PC-3 (cell line): ENCODE measurements at regions of chr11 and their contacts with region 1.

Region 1: DNA sequence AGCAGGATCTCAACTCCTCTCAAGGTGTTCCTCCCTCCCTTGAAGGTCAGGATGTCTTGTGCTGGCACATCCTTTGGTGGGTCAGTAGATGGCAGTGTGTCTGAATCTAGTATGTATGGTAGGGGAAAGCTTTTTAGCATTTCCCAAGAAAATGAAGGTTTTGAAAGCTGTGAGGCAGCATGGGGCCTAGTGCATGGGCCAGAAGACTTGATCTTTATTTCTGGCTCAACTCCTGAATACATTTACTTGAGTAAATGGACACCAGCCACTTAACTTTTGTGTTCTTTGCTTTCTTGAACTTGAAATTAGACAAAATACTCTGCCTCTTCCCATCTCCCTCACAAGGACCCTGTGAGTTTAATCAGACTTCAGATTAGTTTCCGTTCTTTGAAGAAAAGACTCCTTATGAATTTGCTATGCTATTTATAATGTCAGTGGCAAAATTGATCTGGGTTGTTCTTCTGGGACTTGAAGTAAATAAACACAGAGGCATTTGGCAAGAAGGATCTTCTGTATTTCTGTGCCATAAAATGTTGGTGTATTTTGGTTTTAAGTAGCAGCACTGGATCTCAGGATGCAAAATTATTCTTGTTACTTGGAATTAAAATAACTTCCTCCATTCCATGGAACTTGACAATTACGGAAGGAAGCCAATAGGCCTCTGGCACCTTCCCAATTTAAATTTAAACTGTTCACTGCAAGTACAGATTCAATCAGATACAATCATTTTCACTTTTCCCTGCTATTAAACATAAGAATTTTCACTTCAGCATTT is 288.8 kb downstream of the CASP12 start:
- DNase-seq: peak; percentile 75
- ATAC-seq: peak; percentile 98
- H3K4me3 ChIP-seq: no peak overlapping the region
- H3K27ac ChIP-seq: no peak overlapping the region
- H3K4me1 ChIP-seq: no peaks in the 10 kb centered on the region
- H3K27me3 ChIP-seq: no peaks in the 10 kb centered on the region
- CTCF ChIP-seq: peak; percentile 93

Region 2: DNA sequence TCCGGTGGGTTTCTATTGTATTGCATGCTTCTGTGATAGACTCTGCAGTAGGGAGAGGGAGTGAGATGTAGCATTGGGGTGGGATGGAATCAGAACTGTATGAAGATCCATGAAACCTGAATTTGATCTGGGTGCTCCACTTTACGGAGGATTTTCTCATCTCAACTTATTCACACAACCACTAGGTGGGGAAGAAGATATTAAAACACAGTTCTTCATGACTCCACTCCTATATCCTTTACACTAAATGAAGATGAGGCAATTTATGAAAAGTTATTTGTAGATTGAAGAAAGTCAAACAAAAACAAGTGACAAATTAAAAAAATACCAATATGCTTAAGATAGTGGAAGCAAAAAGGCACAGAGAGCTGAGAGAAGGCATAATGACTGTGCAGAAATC is 353.0 kb before region 1 on chr11:
- CTCF ChIA-PET with region 1: no interaction called
- POLR2A ChIA-PET with region 1: no interaction called
- intact Hi-C with region 1: loop called (anchors 5 kb)
- DNase-seq: peak; percentile 42
- ATAC-seq: peak; percentile 56; the same call in 1 of the 2 replicates
- H3K4me3 ChIP-seq: no peak overlapping the region
- H3K27ac ChIP-seq: no peak overlapping the region
- H3K4me1 ChIP-seq: no peaks in the 10 kb centered on the region
- H3K27me3 ChIP-seq: no peaks in the 10 kb centered on the region
- CTCF ChIP-seq: peak; percentile 64

Region 3: GRCh38 chr11:104946907-104947306 is 337.4 kb after region 1 on chr11:
- CTCF ChIA-PET with region 1: no interaction called
- POLR2A ChIA-PET with region 1: no interaction called
- intact Hi-C with region 1: loop called (anchors 10 kb)
- DNase-seq: peak; percentile 87
- ATAC-seq: peak; percentile 74
- H3K4me3 ChIP-seq: no peak overlapping the region
- H3K27ac ChIP-seq: no peak overlapping the region
- H3K4me1 ChIP-seq: no peaks in the 10 kb centered on the region
- H3K27me3 ChIP-seq: no peaks in the 10 kb centered on the region
- CTCF ChIP-seq: peak; percentile 81